ENCODE measurements at regions of chr10 and their contacts with region 1.

Region 1: DNA sequence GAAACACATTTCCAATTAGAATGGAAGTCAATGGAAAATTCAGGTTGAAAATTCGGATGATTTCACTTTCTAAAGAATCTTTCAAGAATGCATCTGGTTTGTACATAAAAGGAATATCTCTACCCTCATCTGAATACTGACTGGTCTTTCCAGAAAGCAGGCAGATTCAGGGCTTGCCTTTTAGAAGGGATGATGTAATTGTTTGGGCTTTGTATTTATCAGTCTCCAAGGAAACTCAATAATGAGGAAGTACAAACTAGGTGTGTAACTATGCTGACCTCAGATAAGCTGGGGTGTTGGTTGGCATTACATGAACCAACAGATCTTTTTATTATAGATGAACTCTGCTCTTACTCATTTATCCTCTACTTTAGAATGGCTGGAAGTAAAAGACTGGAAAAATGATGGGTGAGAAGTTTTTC is 24.1 kb downstream of the PDLIM1 start:
- DNase-seq: peak in 1 of 2 experiments; percentile 97
- H3K4me3 ChIP-seq: no peak overlapping the region
- H3K27ac ChIP-seq: peak overlapping the region; percentile 97
- H3K4me1 ChIP-seq: peaks cover 60% of the 10 kb centered on the region
- H3K27me3 ChIP-seq: no peaks in the 10 kb centered on the region
- CTCF ChIP-seq: no peak

Region 2: DNA sequence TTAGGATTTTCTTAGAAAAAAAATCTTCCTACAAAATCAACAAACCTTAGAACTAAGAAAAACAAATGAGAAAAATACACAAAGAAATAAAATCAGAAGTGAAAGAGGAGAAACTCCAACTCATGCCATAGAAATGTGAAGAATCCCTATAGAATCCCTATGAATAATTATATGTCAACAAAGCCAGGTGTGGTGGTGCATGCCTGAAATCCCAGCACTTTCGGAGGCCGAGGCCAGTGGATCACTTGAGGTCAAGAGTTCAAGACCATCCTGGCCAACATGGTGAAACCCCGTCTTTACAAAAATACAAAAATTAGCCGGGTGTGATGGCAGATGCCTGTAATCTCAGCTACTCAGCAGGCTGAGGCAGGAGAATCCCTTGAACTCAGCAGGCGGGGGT is 45.6 kb before region 1 on chr10:
- CTCF ChIA-PET with region 1: no interaction called
- POLR2A ChIA-PET with region 1: no interaction called
- intact Hi-C with region 1: loop called (anchors 1 kb)
- DNase-seq: peak; percentile 65 to 82
- H3K4me3 ChIP-seq: no peak overlapping the region
- H3K27ac ChIP-seq: peak overlapping the region; percentile 91
- H3K4me1 ChIP-seq: peaks cover 44% of the 10 kb centered on the region
- H3K27me3 ChIP-seq: no peaks in the 10 kb centered on the region
- CTCF ChIP-seq: no peak

Region 3: GRCh38 chr10:95229724-95230627 is 36.7 kb before region 1 on chr10:
- CTCF ChIA-PET with region 1: no interaction called
- POLR2A ChIA-PET with region 1: no interaction called
- intact Hi-C with region 1: loop called (anchors 2 kb)
- DNase-seq: peak; percentile 48 to 94
- H3K4me3 ChIP-seq: peak overlapping the region; percentile 33; the same call in 1 of the 2 replicates
- H3K27ac ChIP-seq: peak overlapping the region; percentile 98
- H3K4me1 ChIP-seq: peaks cover 47% of the 10 kb centered on the region
- H3K27me3 ChIP-seq: no peaks in the 10 kb centered on the region
- CTCF ChIP-seq: no peak

Region 4: DNA sequence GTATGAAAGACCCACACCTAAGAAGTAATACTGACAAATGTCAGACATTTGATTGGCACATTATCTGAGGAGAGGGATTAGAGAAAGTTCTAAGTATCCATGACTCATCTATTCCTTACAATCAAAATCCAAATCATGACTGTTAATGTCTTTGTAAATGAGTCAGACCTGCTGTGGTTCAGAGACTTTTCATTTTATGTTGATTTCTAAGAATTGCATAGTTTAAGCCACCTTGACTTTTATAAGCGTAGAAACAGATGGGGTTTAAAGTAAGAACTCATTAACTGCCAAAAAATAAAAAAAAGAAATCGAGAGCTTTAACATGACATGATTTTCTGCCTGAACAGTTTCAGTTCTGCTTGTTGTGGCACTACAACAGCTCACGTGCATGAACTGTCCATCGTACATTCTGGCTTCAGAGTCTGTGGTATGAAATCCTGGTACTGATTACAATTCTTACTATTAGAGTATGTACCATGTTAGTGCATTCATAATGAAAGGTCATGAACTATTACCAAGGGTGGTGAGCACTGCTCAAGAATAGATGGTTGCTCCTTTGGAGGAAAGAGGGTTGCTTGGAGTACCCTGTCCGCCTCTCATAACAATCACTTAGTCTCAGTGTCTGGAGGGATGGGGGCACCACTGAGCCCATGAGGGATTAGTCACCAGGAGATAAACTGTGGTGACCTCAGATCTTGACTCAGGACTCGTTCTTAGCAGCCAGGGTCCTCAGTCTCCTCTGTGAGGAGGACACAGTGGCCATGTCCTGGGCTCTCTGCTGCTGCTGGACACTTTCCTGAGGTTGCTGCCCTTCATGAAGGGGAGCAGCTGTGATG is 30.4 kb before region 1 on chr10:
- CTCF ChIA-PET with region 1: no interaction called
- POLR2A ChIA-PET with region 1: no interaction called
- intact Hi-C with region 1: loop called (anchors 1 kb)
- DNase-seq: peak; percentile 19 to 83
- H3K4me3 ChIP-seq: no peak overlapping the region
- H3K27ac ChIP-seq: peak overlapping the region; percentile 98
- H3K4me1 ChIP-seq: peaks cover 39% of the 10 kb centered on the region
- H3K27me3 ChIP-seq: no peaks in the 10 kb centered on the region
- CTCF ChIP-seq: no peak

Region 5: GRCh38 chr10:95290461-95291364 is 24.0 kb after region 1 on chr10 and contains the start of gene PDLIM1:
- CTCF ChIA-PET with region 1: no interaction called
- POLR2A ChIA-PET with region 1: interaction called, 7 read pairs
- intact Hi-C with region 1: loop called (anchors 2 kb)
- DNase-seq: peak in 1 of 2 experiments; percentile 71
- H3K4me3 ChIP-seq: peak within 1 kb of the TSS; percentile 59
- H3K27ac ChIP-seq: peak within 1 kb of the TSS; percentile 23; the same call in 1 of the 2 replicates
- H3K4me1 ChIP-seq: peaks cover 31% of the 10 kb centered on the region
- H3K27me3 ChIP-seq: no peaks in the 10 kb centered on the region
- CTCF ChIP-seq: no peak
- total RNA-seq, gene PDLIM1: 202 and 215 TPM in 2 replicates

Region 6: GRCh38 chr10:95408983-95409873 is 142.5 kb after region 1 on chr10:
- CTCF ChIA-PET with region 1: interaction called, 7 read pairs
- POLR2A ChIA-PET with region 1: no interaction called
- intact Hi-C with region 1: loop called (anchors 2 kb)
- DNase-seq: peak; percentile 23 to 82
- H3K4me3 ChIP-seq: peak overlapping the region; percentile 44; the same call in 1 of the 2 replicates
- H3K27ac ChIP-seq: peak overlapping the region; percentile 100
- H3K4me1 ChIP-seq: peaks cover 54% of the 10 kb centered on the region
- H3K27me3 ChIP-seq: no peaks in the 10 kb centered on the region
- CTCF ChIP-seq: no peak; the same call in 1 of the 2 replicates

Region 7: DNA sequence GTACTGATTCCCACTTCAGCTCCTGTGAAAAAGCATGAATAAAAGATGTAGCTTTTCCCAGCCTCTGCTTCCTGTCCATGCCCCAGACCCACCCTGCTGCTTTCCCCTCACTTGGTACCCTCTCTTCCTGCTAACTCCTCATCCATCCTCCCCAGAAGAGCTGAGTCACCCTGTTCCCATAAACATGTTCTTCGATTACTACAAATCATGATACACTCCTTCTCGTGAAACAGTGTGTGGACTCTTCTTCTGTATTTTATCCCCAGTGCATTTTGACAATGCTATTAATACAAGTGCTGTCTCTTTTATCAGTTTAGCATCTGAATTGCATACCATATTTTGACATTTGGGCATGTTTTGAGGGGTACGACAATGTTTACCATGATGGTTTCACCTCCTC is 340.2 kb after region 1 on chr10:
- CTCF ChIA-PET with region 1: no interaction called
- POLR2A ChIA-PET with region 1: no interaction called
- intact Hi-C with region 1: no loop called
- DNase-seq: no peak
- H3K4me3 ChIP-seq: no peak overlapping the region
- H3K27ac ChIP-seq: no peak overlapping the region
- H3K4me1 ChIP-seq: no peaks in the 10 kb centered on the region
- H3K27me3 ChIP-seq: no peaks in the 10 kb centered on the region
- CTCF ChIP-seq: no peak